ENCODE measurements at regions of chr6 and their contacts with region 1.

Region 1: GRCh38 chr6:153511896-153512496 is 380.9 kb upstream of the RGS17 start:
- DNase-seq: peak in 1 of 35 experiments; percentile 25
- ATAC-seq: no peak
- H3K4me3 ChIP-seq: no peak overlapping the region
- H3K4me3 Mint-ChIP-seq: no peak overlapping the region
- H3K27ac ChIP-seq: no peak overlapping the region
- H3K27ac Mint-ChIP-seq: no peak overlapping the region
- H3K4me1 ChIP-seq: no peaks in the 10 kb centered on the region
- H3K4me1 Mint-ChIP-seq: peaks cover 0 to 1% (median 0%) of the 10 kb centered on the region in 3 donors
- H3K27me3 ChIP-seq: no peaks in the 10 kb centered on the region
- H3K27me3 Mint-ChIP-seq: no peaks in the 10 kb centered on the region

Region 2: GRCh38 chr6:153032255-153032882 is 479.6 kb before region 1 on chr6:
- CTCF ChIA-PET with region 1: interaction called in 1 of 2 experiments, 14 read pairs
- POLR2A ChIA-PET with region 1: no interaction called
- DNase-seq: peak in 1 of 35 experiments; percentile 15
- ATAC-seq: no peak
- H3K4me3 ChIP-seq: no peak overlapping the region
- H3K4me3 Mint-ChIP-seq: no peak overlapping the region
- H3K27ac ChIP-seq: no peak overlapping the region
- H3K27ac Mint-ChIP-seq: no peak overlapping the region
- H3K4me1 ChIP-seq: no peaks in the 10 kb centered on the region
- H3K4me1 Mint-ChIP-seq: no peaks in the 10 kb centered on the region
- H3K27me3 ChIP-seq: no peaks in the 10 kb centered on the region
- H3K27me3 Mint-ChIP-seq: peaks cover 9 to 13% of the 10 kb centered on the region in 2 donors